WTC11 (cell line): ENCODE measurements at regions of chr16 and their contacts with region 1.

Region 1: DNA sequence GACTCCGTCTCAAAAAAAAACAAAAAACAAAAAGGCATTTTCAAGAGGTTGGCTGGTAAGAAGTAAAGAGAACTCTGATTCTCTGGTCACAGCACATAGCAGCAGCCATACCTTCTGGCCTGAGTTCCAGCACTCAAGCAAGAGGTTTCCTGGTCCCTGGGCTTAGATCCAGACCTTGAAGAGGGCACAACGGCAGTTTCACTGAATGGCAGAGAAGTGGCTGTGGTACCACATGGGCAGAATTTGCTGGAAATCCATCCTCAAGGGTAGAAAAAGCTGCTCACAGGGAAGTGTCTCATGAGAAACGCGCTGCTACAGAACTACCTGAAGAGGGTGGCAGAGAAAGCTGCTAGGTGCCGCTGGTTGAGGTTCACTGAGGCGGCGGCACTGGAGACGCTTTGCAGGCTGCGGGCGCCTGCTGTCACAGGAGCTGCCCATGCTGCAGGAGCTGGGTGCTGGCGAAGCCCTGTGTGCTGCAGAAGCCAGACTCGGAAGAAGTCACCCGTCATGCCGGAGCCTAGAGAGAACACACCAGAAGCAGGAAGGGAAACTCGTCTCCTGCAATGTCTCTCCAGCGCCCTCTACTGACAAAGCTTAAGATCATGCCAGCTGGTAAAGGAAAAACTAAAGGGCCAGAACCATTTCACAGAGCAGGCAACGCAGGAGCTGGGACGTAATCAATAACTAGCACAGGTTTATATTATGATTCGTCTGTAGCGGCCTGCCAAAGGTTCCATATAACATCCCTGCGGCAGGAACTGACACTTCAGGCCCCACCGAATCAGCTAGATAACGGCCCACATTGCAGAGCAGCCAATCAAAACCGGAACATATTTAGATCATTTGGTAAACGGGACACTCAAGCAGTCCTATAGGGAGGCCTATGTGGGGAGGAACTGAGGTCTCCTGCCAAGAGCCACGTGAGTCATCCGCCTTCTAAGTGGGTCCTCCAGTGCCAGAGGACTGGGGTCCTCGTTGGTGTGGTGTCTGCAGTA is 5.4 kb upstream of the ZNF213 start:
- DNase-seq: peak; percentile 69
- ATAC-seq: peak; percentile 58
- H3K4me3 Mint-ChIP-seq: peak overlapping the region; percentile 45
- H3K27ac Mint-ChIP-seq: peak overlapping the region; percentile 95
- H3K4me1 Mint-ChIP-seq: peaks cover 42% of the 10 kb centered on the region
- H3K27me3 Mint-ChIP-seq: no peaks in the 10 kb centered on the region
- CTCF ChIP-seq: peak; percentile 87

Region 2: DNA sequence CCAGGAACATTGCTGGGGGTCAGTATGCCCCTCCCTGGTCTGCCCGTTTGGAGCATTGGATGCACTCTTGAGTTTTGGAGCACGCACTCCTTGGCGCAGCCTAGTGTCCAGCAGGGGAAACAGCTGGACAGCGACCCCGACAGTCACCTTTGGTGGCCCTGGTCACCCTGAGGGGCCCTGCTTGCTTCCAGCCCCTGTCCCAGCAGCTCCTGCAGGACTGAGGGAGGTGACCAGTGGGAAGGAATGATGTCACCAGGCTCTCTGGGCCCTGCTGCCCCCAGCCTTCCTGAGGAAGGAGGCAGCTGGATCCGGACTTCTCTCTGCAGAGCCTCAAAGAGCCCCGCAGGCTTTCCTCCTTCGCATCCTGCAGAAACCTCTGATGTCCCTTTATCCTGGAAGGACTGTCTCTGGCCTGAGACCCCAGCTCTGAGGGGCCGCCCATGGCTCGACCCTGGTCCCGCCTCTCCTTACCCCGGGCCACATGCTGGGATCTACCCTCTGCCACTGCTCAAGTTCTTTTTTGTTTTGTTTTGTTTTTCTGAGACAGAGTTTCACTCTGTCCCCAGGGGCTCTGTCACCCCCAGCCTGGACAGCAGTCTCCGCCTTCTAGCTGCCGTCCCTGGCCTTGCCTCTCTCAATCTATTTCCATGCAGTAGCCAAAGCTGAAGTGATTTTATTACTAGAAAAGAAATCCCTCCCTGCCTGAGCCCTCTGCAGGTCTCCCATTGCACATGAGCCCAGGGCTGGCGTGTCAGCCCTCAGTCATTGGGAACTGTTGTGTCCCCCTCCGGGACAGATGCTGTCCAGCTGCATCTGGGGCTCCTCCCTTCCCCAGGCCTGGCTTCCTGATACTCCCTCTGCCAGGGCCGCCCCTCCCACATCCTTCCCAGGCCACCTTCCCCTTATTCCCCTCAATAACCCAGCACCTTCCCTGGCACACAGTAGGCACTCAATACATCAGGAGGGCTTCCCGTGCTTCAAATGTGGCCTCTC is 41.9 kb before region 1 on chr16:
- CTCF ChIA-PET with region 1: interaction called, 20 read pairs
- POLR2A ChIA-PET with region 1: interaction called, 3 read pairs
- DNase-seq: peak; percentile 50
- ATAC-seq: peak; percentile 49
- H3K4me3 Mint-ChIP-seq: no peak overlapping the region
- H3K27ac Mint-ChIP-seq: peak overlapping the region; percentile 84
- H3K4me1 Mint-ChIP-seq: peaks cover 21% of the 10 kb centered on the region
- H3K27me3 Mint-ChIP-seq: no peaks in the 10 kb centered on the region
- CTCF ChIP-seq: no peak

Region 3: GRCh38 chr16:3106205-3106928 is 23.1 kb before region 1 on chr16:
- CTCF ChIA-PET with region 1: interaction called, 112 read pairs
- POLR2A ChIA-PET with region 1: interaction called, 14 read pairs
- DNase-seq: peak; percentile 95
- ATAC-seq: peak; percentile 76
- H3K4me3 Mint-ChIP-seq: peak overlapping the region; percentile 68
- H3K27ac Mint-ChIP-seq: peak overlapping the region; percentile 89
- H3K4me1 Mint-ChIP-seq: peaks cover 37% of the 10 kb centered on the region
- H3K27me3 Mint-ChIP-seq: no peaks in the 10 kb centered on the region; the same call in 1 of the 2 replicates
- CTCF ChIP-seq: no peak

Region 4: GRCh38 chr16:3150346-3151218 is 21.1 kb after region 1 on chr16:
- CTCF ChIA-PET with region 1: interaction called, 54 read pairs
- POLR2A ChIA-PET with region 1: interaction called, 9 read pairs
- DNase-seq: peak; percentile 98
- ATAC-seq: peak; percentile 78
- H3K4me3 Mint-ChIP-seq: peak overlapping the region; percentile 93
- H3K27ac Mint-ChIP-seq: peak overlapping the region; percentile 96
- H3K4me1 Mint-ChIP-seq: peaks cover 7% of the 10 kb centered on the region
- H3K27me3 Mint-ChIP-seq: peaks cover 37% of the 10 kb centered on the region
- CTCF ChIP-seq: no peak

Region 5: DNA sequence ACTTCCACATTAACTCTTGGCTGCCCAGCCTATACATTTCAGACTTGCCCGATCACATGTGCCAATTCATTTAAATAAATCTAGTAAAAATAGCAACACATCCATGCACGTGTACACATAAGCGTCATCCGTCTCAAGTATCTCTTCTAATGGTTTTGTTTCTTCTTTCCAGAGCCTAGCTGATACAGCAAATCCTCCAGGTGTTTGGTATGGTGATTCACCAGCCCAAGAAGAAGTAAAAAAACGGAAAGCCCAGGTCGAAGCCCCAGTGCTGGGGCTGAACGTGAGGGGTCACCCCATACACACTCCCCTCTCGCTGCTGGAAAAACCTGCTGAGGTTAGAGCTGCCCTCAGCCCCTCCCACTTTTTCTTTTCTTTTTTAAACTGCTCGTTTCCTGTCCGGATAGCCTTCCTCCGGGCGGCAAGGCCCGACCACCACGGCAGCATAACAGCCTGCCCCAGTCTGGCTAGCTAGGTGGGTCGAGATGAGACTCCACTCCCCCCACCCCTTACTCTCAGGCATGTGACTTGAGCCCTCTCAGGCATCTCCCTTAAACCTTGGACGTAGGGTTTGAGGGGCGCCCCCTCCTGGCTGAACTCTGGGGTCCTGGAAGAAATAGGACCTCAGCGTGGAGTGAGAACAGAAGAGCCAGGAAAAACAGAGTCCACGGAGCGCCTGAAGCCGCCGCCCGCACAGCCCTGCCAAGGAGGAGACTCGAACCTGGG is 44.6 kb after region 1 on chr16:
- CTCF ChIA-PET with region 1: interaction called, 86 read pairs
- POLR2A ChIA-PET with region 1: interaction called, 3 read pairs
- DNase-seq: peak; percentile 92
- ATAC-seq: peak; percentile 34
- H3K4me3 Mint-ChIP-seq: peak overlapping the region; percentile 75
- H3K27ac Mint-ChIP-seq: peak overlapping the region; percentile 85
- H3K4me1 Mint-ChIP-seq: peaks cover 25% of the 10 kb centered on the region
- H3K27me3 Mint-ChIP-seq: peaks cover 57% of the 10 kb centered on the region
- CTCF ChIP-seq: peak; percentile 62; the same call in 1 of the 2 replicates

Region 6: GRCh38 chr16:3305109-3306068 is 176.0 kb after region 1 on chr16 and contains the starts of genes TIGD7 and ZNF75A:
- CTCF ChIA-PET with region 1: no interaction called
- POLR2A ChIA-PET with region 1: no interaction called
- DNase-seq: peak; percentile 84
- ATAC-seq: peak; percentile 98
- H3K4me3 Mint-ChIP-seq: peak within 1 kb of the TSS; percentile 77
- H3K27ac Mint-ChIP-seq: no peak within 1 kb of the TSS; the same call in 1 of the 2 replicates
- H3K4me1 Mint-ChIP-seq: peaks cover 8% of the 10 kb centered on the region
- H3K27me3 Mint-ChIP-seq: peaks cover 25% of the 10 kb centered on the region
- CTCF ChIP-seq: no peak
- total RNA-seq, gene TIGD7: 5.3 to 7.4 TPM (median 7.0 TPM) in 3 replicates
- total RNA-seq, gene ZNF75A: 21.8 to 31.5 TPM (median 23.5 TPM) in 3 replicates

Region 7: GRCh38 chr16:3480901-3481695 is 351.7 kb after region 1 on chr16:
- CTCF ChIA-PET with region 1: no interaction called
- POLR2A ChIA-PET with region 1: no interaction called
- DNase-seq: peak; percentile 31
- ATAC-seq: peak; percentile 46
- H3K4me3 Mint-ChIP-seq: no peak overlapping the region
- H3K27ac Mint-ChIP-seq: peak overlapping the region; percentile 77
- H3K4me1 Mint-ChIP-seq: peaks cover 10% of the 10 kb centered on the region
- H3K27me3 Mint-ChIP-seq: no peaks in the 10 kb centered on the region
- CTCF ChIP-seq: no peak